HEK293T (cell line): ENCODE measurements at regions of chr1 and their contacts with region 1.

Region 1: GRCh38 chr1:34984793-34985608 is at the start of gene TMEM35B:
- DNase-seq: peak; percentile 63

Region 2: GRCh38 chr1:34970829-34971228 is 14.2 kb before region 1 on chr1:
- CTCF ChIA-PET with region 1: interaction called, 3 read pairs
- POLR2A ChIA-PET with region 1: interaction called, 21 read pairs
- DNase-seq: no peak

Region 3: DNA sequence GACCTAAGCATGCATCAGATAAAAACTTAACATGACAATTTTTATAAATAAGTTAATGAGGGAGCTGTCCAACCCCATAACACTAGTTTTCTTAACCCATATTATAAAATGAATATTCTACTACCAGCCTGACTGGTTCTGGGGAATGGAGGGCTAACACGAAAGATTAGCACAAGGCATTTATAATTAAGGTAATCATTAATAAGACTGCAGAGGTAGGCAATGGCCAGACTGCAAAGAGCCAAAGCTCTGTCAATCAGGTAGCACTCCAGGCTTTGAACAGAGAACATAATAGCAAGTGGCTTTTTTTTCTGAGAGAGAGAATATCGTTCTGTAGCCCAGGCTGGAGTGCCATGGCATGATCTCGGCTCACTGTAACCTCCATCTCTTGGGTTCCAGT is 20.7 kb after region 1 on chr1:
- CTCF ChIA-PET with region 1: no interaction called
- POLR2A ChIA-PET with region 1: interaction called, 10 read pairs
- DNase-seq: no peak

Region 4: GRCh38 chr1:35079003-35079930 is 94.3 kb after region 1 on chr1 and contains the start of gene ZMYM1:
- CTCF ChIA-PET with region 1: no interaction called
- POLR2A ChIA-PET with region 1: interaction called, 17 read pairs
- DNase-seq: peak; percentile 98